Mammary epithelial cell (primary cell): ENCODE measurements at regions of chr1 and their contacts with region 1.

Region 1: GRCh38 chr1:1554926-1555915 is 14.8 kb upstream of the TMEM240 start:
- DNase-seq: peak; percentile 48
- H3K4me3 ChIP-seq: no peak overlapping the region
- H3K27ac ChIP-seq: no peak overlapping the region
- H3K4me1 ChIP-seq: peaks cover 11% of the 10 kb centered on the region
- H3K27me3 ChIP-seq: no peaks in the 10 kb centered on the region
- CTCF ChIP-seq: no peak

Region 2: DNA sequence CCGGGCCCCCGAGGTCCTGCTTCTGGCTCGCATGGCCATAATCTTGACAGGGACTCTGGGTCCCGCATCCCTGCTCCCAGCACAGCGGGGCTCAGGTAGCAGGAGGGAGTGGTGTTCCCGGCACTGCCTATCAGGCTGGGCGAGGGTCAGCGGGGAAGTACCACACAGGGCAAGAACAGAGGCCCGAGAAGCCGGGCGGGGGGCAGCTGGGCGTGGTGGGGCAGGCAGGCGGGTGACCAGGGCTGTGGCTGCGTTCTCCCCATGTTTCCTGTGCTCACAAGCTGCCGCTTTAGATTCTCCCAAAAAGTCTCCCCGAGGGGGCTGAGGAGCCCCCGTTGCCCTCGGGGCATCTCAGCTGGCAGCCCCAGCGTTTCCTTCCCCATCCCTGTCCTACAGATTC is 65.4 kb before region 1 on chr1:
- CTCF ChIA-PET with region 1: no interaction called
- dilution Hi-C with region 1: loop called (anchors 5 kb)
- in situ Hi-C with region 1: no loop called
- intact Hi-C with region 1: no loop called
- DNase-seq: no peak
- H3K4me3 ChIP-seq: no peak overlapping the region
- H3K27ac ChIP-seq: no peak overlapping the region
- H3K4me1 ChIP-seq: no peaks in the 10 kb centered on the region
- H3K27me3 ChIP-seq: no peaks in the 10 kb centered on the region
- CTCF ChIP-seq: no peak

Region 3: DNA sequence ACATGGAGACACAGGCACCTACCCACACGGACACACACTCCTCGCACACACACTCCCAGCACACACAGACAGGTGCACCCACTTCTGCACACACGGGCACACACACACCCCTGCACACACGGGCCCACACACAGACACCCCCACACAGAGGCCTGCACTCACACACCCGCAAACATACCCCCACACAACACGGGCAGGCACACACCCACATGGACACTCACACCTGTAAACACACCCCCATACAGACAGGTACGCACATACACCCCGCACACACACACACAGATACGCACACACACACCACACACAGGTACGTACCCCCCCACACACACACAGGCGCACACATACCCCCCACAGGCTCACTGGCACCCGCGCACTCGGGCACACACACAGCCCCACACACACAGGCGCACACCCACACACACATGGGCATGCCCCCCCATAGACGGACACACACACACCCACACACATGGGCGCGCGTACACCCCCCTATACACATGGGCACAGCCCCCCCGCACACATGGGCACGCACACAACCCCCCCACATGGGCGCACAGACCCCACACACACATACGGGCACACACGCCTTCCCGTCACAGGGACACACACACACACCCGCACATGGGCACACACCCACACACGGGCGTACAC is 37.1 kb before region 1 on chr1:
- CTCF ChIA-PET with region 1: no interaction called
- dilution Hi-C with region 1: loop called (anchors 5 kb)
- in situ Hi-C with region 1: no loop called
- intact Hi-C with region 1: no loop called
- DNase-seq: no peak
- H3K4me3 ChIP-seq: no peak overlapping the region
- H3K27ac ChIP-seq: no peak overlapping the region
- H3K4me1 ChIP-seq: peaks cover 2% of the 10 kb centered on the region
- H3K27me3 ChIP-seq: no peaks in the 10 kb centered on the region
- CTCF ChIP-seq: no peak

Region 4: GRCh38 chr1:1591452-1591851 is 36.2 kb after region 1 on chr1:
- CTCF ChIA-PET with region 1: no interaction called
- dilution Hi-C with region 1: no loop called
- in situ Hi-C with region 1: no loop called
- intact Hi-C with region 1: no loop called
- DNase-seq: no peak
- H3K4me3 ChIP-seq: no peak overlapping the region
- H3K27ac ChIP-seq: no peak overlapping the region
- H3K4me1 ChIP-seq: no peaks in the 10 kb centered on the region
- H3K27me3 ChIP-seq: no peaks in the 10 kb centered on the region
- CTCF ChIP-seq: no peak